GM10248 (cell line): ENCODE measurements at regions of chr5 and their contacts with region 1.

Region 1: GRCh38 chr5:138789771-138790242 is 36.6 kb downstream of the CTNNA1 start:
- DNase-seq: peak; percentile 64
- CTCF ChIP-seq: peak; percentile 57

Region 2: GRCh38 chr5:138772986-138773594 is 16.7 kb before region 1 on chr5:
- CTCF ChIA-PET with region 1: interaction called, 29 read pairs
- POLR2A ChIA-PET with region 1: no interaction called
- DNase-seq: no peak
- CTCF ChIP-seq: no peak

Region 3: DNA sequence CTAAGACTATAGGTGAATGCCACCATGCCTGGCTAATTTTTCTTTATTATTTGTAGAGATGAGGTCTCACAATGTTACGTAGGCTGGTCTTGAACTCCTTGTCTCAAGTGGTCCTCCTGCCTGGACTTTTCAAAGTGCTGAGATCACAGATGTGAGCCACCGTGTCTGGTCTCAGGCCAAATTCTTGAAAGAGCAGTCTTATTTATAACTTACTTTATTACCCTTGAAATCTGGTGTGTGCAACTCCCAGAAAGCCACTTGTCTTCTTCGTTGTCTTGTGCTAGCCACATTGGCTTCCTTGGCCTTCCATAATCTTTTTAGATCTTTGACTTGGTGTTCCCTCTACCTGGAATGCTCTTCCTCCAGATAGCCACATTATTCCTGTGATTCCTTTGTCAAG is 13.5 kb after region 1 on chr5:
- CTCF ChIA-PET with region 1: interaction called, 51 read pairs
- POLR2A ChIA-PET with region 1: no interaction called
- DNase-seq: no peak
- CTCF ChIP-seq: no peak

Region 4: GRCh38 chr5:138819081-138819480 is 29.3 kb after region 1 on chr5:
- CTCF ChIA-PET with region 1: interaction called, 18 read pairs
- POLR2A ChIA-PET with region 1: no interaction called
- DNase-seq: no peak
- CTCF ChIP-seq: no peak

Region 5: DNA sequence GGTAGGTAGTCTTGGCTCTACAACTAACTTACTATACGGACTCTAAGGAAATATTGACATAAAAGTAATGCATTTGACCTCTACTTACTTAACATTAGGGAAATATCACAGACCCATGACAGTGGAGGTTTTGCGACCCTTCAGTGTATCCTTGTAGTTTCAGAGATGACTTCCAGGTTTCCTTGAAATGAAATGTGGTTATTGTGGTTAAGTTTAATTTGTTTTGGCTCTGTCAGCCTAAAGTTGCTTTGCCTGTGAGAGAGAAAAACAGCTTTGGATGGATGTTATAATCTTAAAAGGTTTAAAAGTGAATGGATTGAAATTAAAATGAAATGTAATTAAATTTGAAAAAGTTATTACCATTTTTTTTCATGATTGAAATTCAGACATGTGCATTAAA is 42.4 kb after region 1 on chr5:
- CTCF ChIA-PET with region 1: interaction called, 11 read pairs
- POLR2A ChIA-PET with region 1: no interaction called
- DNase-seq: no peak
- CTCF ChIP-seq: no peak

Region 6: GRCh38 chr5:138890644-138891043 is 100.8 kb after region 1 on chr5:
- CTCF ChIA-PET with region 1: no interaction called
- POLR2A ChIA-PET with region 1: no interaction called
- DNase-seq: no peak
- CTCF ChIP-seq: no peak

Region 7: DNA sequence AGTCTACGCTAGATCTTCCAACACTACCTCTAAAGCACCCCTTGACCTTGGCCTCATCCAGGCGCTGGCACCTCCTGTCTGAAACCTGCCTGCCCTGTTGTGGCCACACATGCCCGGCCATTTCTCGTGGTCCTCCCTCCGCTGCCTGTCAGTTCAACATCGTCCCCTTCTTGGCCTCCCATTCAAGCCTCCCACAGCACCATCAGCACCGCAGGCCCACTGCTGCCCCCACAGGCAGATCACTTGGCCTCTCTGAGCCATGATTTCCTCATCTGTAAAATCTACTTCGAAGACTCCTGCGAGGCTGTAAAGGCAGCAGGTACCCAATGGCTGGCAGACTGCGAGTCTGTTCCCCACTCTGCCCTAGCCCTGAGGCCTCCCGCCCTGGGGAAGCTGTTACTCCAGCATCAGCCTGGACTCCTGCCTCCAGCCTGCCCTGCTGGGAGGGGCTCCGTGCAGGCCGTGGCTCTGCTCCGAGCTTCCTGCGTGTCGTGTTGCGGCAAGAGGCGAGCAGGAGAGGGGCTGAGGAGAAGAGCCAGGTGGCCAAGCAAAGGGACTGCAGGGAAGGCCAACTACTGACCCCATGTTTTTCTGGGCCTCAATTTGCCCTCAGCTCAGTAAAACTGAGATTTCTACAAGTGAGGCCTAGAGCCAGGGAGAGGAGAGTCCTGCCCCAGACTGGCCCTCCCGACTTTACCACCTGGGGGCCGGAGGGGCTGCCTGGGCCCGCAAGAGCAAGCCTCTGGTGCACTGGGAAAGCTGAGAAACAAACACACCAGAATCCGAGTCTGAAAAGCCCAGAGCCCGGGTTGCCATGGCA is 155.8 kb after region 1 on chr5:
- CTCF ChIA-PET with region 1: no interaction called
- POLR2A ChIA-PET with region 1: no interaction called
- DNase-seq: no peak
- CTCF ChIP-seq: no peak